CD8-positive, alpha-beta T cell (primary cell): ENCODE measurements at regions of chr16 and their contacts with region 1.

Region 1: DNA sequence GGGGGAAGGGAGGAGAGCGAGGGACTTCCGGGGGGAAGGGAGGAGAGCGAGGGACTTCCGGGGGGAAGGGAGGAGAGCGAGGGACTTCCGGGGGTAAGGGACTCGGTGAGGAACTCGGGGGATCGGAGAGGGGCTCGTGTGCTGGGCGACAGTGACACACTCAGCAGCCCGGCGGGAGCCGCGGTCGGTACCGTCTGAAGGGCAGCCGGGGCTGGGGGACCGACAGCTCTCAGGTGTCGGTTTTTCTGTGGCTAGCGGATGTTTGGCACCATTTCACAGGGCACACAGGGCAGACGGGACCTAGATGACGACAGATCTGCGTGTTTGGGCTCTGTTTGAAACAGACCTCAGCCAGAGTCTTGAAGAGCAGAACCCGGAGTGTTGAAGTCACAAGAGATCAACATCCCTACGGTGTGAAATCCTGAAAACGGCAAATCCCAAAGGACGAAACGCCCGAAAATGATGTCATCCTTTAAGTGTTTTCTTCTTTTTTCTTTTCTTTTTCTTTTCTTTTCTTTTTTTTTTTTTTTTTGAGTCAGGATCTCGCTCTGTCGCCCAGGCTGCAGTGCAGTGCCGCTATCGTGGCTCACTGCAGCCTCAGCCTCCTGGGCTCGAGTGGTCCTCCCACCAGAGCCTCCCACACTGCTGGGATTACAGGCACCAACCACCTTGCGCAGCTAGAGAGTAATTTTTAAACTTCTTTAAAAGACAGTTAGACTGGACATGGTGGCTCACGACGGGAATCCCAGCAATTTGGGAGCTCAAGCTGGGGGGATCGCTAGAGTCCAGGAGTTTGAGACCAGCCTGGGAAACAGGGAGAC is 23.9 kb downstream of the ZNF778 start:
- DNase-seq: peak; percentile 62 to 97 (median 87)
- ATAC-seq: peak; percentile 88
- H3K4me3 ChIP-seq: peak overlapping the region; percentile 76 to 85
- H3K4me3 Mint-ChIP-seq: peak overlapping the region; percentile 92
- H3K27ac ChIP-seq: peak overlapping the region; percentile 89 to 100
- H3K27ac Mint-ChIP-seq: peak overlapping the region; percentile 99
- H3K4me1 ChIP-seq: peaks cover 8% of the 10 kb centered on the region
- H3K4me1 Mint-ChIP-seq: peaks cover 25% of the 10 kb centered on the region
- H3K27me3 ChIP-seq: no peaks in the 10 kb centered on the region
- H3K27me3 Mint-ChIP-seq: no peaks in the 10 kb centered on the region
- CTCF ChIP-seq: no peak

Region 2: DNA sequence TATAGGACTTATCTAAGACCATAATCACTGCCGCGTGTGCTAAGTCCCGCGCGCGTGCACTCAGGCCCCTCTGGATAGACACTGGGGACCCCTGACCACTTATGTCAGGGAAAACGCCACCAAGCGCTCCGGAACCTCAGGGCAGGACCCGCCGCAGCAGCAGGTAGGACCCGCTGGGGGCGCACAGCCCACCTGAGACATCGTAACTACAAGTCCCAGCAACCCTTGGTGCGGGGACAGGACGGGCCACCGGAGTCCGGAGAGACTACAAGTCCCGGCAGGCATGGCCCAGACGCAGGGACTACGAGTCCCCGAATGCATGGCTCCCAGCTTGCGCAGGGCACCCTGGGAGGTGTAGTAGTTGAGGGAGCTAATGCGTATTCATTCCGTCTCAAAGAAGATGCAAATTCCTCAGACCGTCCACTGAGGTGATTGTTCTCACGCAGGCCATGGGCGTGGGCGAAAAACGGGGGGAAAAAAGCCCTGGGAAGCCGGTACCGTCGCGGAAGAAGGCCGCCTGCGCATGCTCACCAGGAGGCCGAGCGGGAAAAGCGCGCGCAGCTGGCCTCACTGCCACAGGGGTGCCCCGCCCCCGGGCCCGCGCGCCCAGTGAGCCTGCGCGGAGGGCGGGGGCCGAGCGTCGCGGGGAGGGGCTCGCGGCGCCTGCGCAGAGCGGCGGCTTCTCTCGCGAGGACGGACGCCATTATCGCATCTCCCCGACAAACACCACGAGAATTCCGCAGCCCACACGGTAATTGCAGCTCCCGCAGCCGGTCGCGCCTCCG is 1290.4 kb before region 1 on chr16 and contains the start of gene BANP:
- CTCF ChIA-PET with region 1: no interaction called
- POLR2A ChIA-PET with region 1: no interaction called
- intact Hi-C with region 1: loop called in 1 of 2 experiments (anchors 10 kb)
- DNase-seq: peak; percentile 92 to 100 (median 96)
- ATAC-seq: peak; percentile 93
- H3K4me3 ChIP-seq: peak within 1 kb of the TSS; percentile 72 to 98
- H3K4me3 Mint-ChIP-seq: peak within 1 kb of the TSS; percentile 97
- H3K27ac ChIP-seq: peak within 1 kb of the TSS; percentile 88 to 96
- H3K27ac Mint-ChIP-seq: peak within 1 kb of the TSS; percentile 99
- H3K4me1 ChIP-seq: peaks cover 37% of the 10 kb centered on the region
- H3K4me1 Mint-ChIP-seq: peaks cover 42% of the 10 kb centered on the region
- H3K27me3 ChIP-seq: no peaks in the 10 kb centered on the region
- H3K27me3 Mint-ChIP-seq: no peaks in the 10 kb centered on the region
- CTCF ChIP-seq: peak; percentile 41
- total RNA-seq, gene BANP: 55.3 to 60.6 TPM

Region 3: GRCh38 chr16:88925101-88925887 is 316.1 kb before region 1 on chr16:
- CTCF ChIA-PET with region 1: no interaction called
- POLR2A ChIA-PET with region 1: no interaction called
- intact Hi-C with region 1: no loop called
- DNase-seq: peak in 2 of 9 experiments; percentile 28 to 38
- ATAC-seq: no peak
- H3K4me3 ChIP-seq: no peak overlapping the region
- H3K4me3 Mint-ChIP-seq: no peak overlapping the region
- H3K27ac ChIP-seq: no peak overlapping the region
- H3K27ac Mint-ChIP-seq: no peak overlapping the region
- H3K4me1 ChIP-seq: peaks cover 14% of the 10 kb centered on the region
- H3K4me1 Mint-ChIP-seq: peaks cover 6% of the 10 kb centered on the region
- H3K27me3 ChIP-seq: no peaks in the 10 kb centered on the region
- H3K27me3 Mint-ChIP-seq: peaks cover 6% of the 10 kb centered on the region
- CTCF ChIP-seq: no peak

Region 4: DNA sequence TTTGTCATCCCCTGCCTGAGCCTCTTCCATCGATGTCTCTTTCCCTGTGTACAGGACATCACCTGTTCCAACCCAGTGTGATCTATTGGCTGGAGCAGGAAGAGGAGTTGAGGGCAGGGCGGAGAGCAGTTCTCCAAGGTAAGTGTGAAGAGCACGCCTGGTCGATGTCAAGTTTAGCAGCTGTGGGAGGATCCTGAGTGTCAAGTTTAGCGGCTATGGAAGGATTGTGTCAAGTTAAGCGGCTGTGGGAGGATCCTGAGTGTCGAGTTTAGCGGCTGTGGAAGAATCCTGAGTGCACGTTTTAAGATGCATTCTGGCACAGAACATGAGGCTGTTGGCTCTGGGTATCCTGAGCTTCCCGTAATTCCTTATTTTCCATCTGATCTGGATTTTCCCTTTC is 16.7 kb before region 1 on chr16:
- CTCF ChIA-PET with region 1: no interaction called
- POLR2A ChIA-PET with region 1: no interaction called
- intact Hi-C with region 1: no loop called
- DNase-seq: no peak
- ATAC-seq: no peak
- H3K4me3 ChIP-seq: no peak overlapping the region
- H3K4me3 Mint-ChIP-seq: no peak overlapping the region
- H3K27ac ChIP-seq: no peak overlapping the region
- H3K27ac Mint-ChIP-seq: no peak overlapping the region
- H3K4me1 ChIP-seq: no peaks in the 10 kb centered on the region
- H3K4me1 Mint-ChIP-seq: peaks cover 7% of the 10 kb centered on the region
- H3K27me3 ChIP-seq: no peaks in the 10 kb centered on the region
- H3K27me3 Mint-ChIP-seq: no peaks in the 10 kb centered on the region
- CTCF ChIP-seq: no peak

Region 5: DNA sequence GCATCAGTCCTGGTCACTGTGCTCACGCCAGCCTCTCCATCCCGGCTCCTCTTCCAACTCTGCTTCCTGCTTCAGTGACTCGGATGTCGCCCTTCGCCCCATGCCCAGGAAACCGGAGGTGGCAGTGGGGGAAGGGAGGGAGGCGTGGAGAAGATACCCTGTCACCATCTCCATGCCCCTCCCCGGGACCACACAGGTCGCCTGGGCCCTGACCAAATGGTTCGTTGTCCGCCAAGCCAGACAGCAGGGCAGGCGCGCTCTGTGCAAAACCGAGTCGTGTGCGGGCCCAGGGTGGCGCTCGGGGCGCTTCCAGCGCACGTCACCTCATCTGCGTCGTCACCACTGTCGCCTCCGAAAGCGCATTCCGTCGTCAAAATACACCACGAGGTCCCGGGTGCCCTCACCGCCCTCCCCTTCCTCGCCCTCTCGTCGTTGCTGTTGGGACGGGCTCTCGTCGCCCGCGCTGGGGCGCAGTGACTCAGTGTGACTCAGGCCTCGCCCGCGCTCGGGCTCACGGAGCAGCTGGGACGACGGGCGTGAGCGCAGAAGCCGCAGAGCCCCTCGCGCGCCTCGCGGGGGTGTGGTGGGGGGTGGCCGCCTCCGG is 15.4 kb after region 1 on chr16:
- CTCF ChIA-PET with region 1: no interaction called
- POLR2A ChIA-PET with region 1: no interaction called
- intact Hi-C with region 1: loop called (anchors 1 kb)
- DNase-seq: peak; percentile 43 to 92 (median 70)
- ATAC-seq: peak; percentile 95
- H3K4me3 ChIP-seq: peak overlapping the region; percentile 24 to 49
- H3K4me3 Mint-ChIP-seq: peak overlapping the region; percentile 70
- H3K27ac ChIP-seq: no peak overlapping the region
- H3K27ac Mint-ChIP-seq: peak overlapping the region; percentile 52
- H3K4me1 ChIP-seq: peaks cover 12% of the 10 kb centered on the region
- H3K4me1 Mint-ChIP-seq: peaks cover 13% of the 10 kb centered on the region
- H3K27me3 ChIP-seq: peaks cover 0 to 14% of the 10 kb centered on the region in 2 experiments
- H3K27me3 Mint-ChIP-seq: peaks cover 19% of the 10 kb centered on the region
- CTCF ChIP-seq: no peak

Region 6: GRCh38 chr16:89289428-89290395 is 48.3 kb after region 1 on chr16:
- CTCF ChIA-PET with region 1: interaction called, 15 read pairs
- POLR2A ChIA-PET with region 1: interaction called, 3 read pairs
- intact Hi-C with region 1: loop called (anchors 1 kb)
- DNase-seq: peak; percentile 49 to 80 (median 72)
- ATAC-seq: peak; percentile 79
- H3K4me3 ChIP-seq: no peak overlapping the region
- H3K4me3 Mint-ChIP-seq: no peak overlapping the region
- H3K27ac ChIP-seq: no peak overlapping the region
- H3K27ac Mint-ChIP-seq: no peak overlapping the region
- H3K4me1 ChIP-seq: peaks cover 3% of the 10 kb centered on the region
- H3K4me1 Mint-ChIP-seq: peaks cover 20% of the 10 kb centered on the region
- H3K27me3 ChIP-seq: no peaks in the 10 kb centered on the region
- H3K27me3 Mint-ChIP-seq: no peaks in the 10 kb centered on the region
- CTCF ChIP-seq: peak; percentile 75

Region 7: GRCh38 chr16:89319883-89320781 is 78.7 kb after region 1 on chr16:
- CTCF ChIA-PET with region 1: interaction called, 3 read pairs
- POLR2A ChIA-PET with region 1: interaction called, 12 read pairs
- intact Hi-C with region 1: loop called in 1 of 2 experiments (anchors 2 kb)
- DNase-seq: peak in 6 of 9 experiments; percentile 17 to 52 (median 40)
- ATAC-seq: no peak
- H3K4me3 ChIP-seq: peak overlapping the region in 1 of 2 experiments; percentile 12
- H3K4me3 Mint-ChIP-seq: peak overlapping the region; percentile 57
- H3K27ac ChIP-seq: peak overlapping the region in 1 of 2 experiments; percentile 43
- H3K27ac Mint-ChIP-seq: peak overlapping the region; percentile 77
- H3K4me1 ChIP-seq: peaks cover 88% of the 10 kb centered on the region
- H3K4me1 Mint-ChIP-seq: peaks cover 92% of the 10 kb centered on the region
- H3K27me3 ChIP-seq: no peaks in the 10 kb centered on the region
- H3K27me3 Mint-ChIP-seq: no peaks in the 10 kb centered on the region
- CTCF ChIP-seq: no peak

Region 8: GRCh38 chr16:89560378-89561141 is 319.2 kb after region 1 on chr16 and contains the start of gene RPL13:
- CTCF ChIA-PET with region 1: interaction called, 3 read pairs
- POLR2A ChIA-PET with region 1: no interaction called
- intact Hi-C with region 1: loop called (anchors 2 to 5 kb)
- DNase-seq: peak; percentile 81 to 97 (median 93)
- ATAC-seq: peak; percentile 89
- H3K4me3 ChIP-seq: peak within 1 kb of the TSS; percentile 73 to 90
- H3K4me3 Mint-ChIP-seq: peak within 1 kb of the TSS; percentile 89
- H3K27ac ChIP-seq: peak within 1 kb of the TSS; percentile 90 to 97
- H3K27ac Mint-ChIP-seq: peak within 1 kb of the TSS; percentile 93
- H3K4me1 ChIP-seq: peaks cover 54% of the 10 kb centered on the region
- H3K4me1 Mint-ChIP-seq: peaks cover 51% of the 10 kb centered on the region
- H3K27me3 ChIP-seq: no peaks in the 10 kb centered on the region
- H3K27me3 Mint-ChIP-seq: no peaks in the 10 kb centered on the region
- CTCF ChIP-seq: no peak
- total RNA-seq, gene RPL13: 4,632 to 4,668 TPM

Region 9: GRCh38 chr16:89873972-89874689 is 632.7 kb after region 1 on chr16:
- CTCF ChIA-PET with region 1: no interaction called
- POLR2A ChIA-PET with region 1: no interaction called
- intact Hi-C with region 1: loop called in 1 of 2 experiments (anchors 10 kb)
- DNase-seq: peak; percentile 86 to 99 (median 96)
- ATAC-seq: peak; percentile 77
- H3K4me3 ChIP-seq: peak overlapping the region; percentile 98
- H3K4me3 Mint-ChIP-seq: peak overlapping the region; percentile 90
- H3K27ac ChIP-seq: peak overlapping the region; percentile 100
- H3K27ac Mint-ChIP-seq: peak overlapping the region; percentile 99
- H3K4me1 ChIP-seq: peaks cover 23% of the 10 kb centered on the region
- H3K4me1 Mint-ChIP-seq: peaks cover 19% of the 10 kb centered on the region
- H3K27me3 ChIP-seq: no peaks in the 10 kb centered on the region
- H3K27me3 Mint-ChIP-seq: no peaks in the 10 kb centered on the region
- CTCF ChIP-seq: no peak